ENCODE measurements at regions of chr17 and their contacts with region 1.

Region 1: GRCh38 chr17:43479948-43480347 is 3.8 kb upstream of the DHX8 start:
- DNase-seq: no peak
- H3K4me3 ChIP-seq: no peak overlapping the region
- H3K27ac ChIP-seq: no peak overlapping the region
- H3K4me1 ChIP-seq: peaks cover 10 to 21% (median 16%) of the 10 kb centered on the region in 6 donors
- H3K27me3 ChIP-seq: no peaks in the 10 kb centered on the region
- CTCF ChIP-seq: no peak
- POLR2A ChIP-seq: no peak

Region 2: GRCh38 chr17:43393944-43394482 is 85.9 kb before region 1 on chr17:
- intact Hi-C with region 1: loop called (anchors 2 kb)
- DNase-seq: peak; percentile 88
- H3K4me3 ChIP-seq: no peak overlapping the region
- H3K27ac ChIP-seq: peak overlapping the region in 5 of 8 donors; percentile 20 to 58 (median 45)
- H3K4me1 ChIP-seq: peaks cover 13 to 62% (median 42%) of the 10 kb centered on the region in 6 donors
- H3K27me3 ChIP-seq: no peaks in the 10 kb centered on the region
- CTCF ChIP-seq: peak; percentile 87 to 97 (median 94)
- POLR2A ChIP-seq: no peak

Region 3: GRCh38 chr17:43546319-43547188 is 66.6 kb after region 1 on chr17 and contains the start of gene ETV4:
- intact Hi-C with region 1: no loop called
- DNase-seq: peak; percentile 95
- H3K4me3 ChIP-seq: peak within 1 kb of the TSS; percentile 42 to 74 (median 62)
- H3K27ac ChIP-seq: no peak within 1 kb of the TSS
- H3K4me1 ChIP-seq: peaks cover 6 to 32% (median 22%) of the 10 kb centered on the region in 6 donors
- H3K27me3 ChIP-seq: peaks cover 0 to 89% (median 43%) of the 10 kb centered on the region in 7 donors
- CTCF ChIP-seq: no peak
- POLR2A ChIP-seq: no peak
- total RNA-seq, gene ETV4: 0.17 to 0.97 (median 0.74) TPM in 4 of 7 donors, not detected in the others

Measured in spleen (tissue), 13 donors.